ENCODE measurements at regions of chr7 and their contacts with region 1.

Region 1: DNA sequence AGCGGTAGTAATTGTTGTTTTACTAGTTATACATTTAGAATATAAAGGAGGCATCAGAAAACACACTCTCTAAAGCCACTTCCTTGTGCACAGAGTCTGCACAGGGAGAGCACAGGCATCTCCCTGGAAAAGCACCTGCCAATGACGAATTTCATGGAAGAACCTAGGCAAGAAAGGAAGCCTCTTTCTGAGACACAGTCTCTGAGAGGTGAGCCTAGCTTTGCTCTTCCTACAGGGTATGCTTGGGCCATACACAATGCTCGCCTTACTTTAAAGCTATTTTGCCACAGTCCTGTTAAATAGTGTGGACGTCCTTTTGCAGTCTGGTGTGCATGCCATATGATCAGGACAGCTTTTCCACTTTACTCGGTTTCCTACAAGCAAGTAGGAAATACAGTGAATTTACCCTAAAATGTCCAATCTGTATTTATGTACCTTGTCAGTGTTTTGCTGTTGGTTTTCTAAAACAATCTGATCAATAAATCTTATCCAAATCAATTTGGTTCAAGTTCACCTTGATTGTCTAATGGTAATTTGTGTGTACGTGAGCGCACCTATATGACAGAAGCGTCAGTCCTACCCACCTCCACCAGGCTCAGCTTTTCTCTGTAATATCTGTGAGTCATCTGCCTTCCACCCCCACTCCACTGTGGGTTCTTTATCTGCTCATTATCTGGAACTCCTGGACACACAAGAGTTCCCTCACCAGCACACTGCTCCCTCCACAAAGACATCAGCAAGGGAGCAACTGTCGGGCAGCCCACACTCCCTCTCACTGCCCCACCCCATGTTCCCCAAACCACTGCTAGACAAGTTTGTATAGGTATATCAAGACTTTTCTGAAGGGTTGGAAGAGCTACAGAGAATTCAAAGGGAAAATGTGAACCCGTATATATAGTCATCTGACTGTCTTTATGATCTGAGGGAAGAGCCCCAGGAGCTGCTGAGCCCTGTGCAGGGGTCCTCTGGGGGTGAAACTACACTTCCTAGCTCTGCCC is 65.2 kb downstream of the KLHDC10 start:
- DNase-seq: no peak
- H3K4me3 Mint-ChIP-seq: no peak overlapping the region
- H3K27ac Mint-ChIP-seq: no peak overlapping the region
- H3K4me1 Mint-ChIP-seq: peaks cover 19% of the 10 kb centered on the region
- H3K27me3 Mint-ChIP-seq: no peaks in the 10 kb centered on the region

Region 2: GRCh38 chr7:130118294-130118693 is 17.2 kb before region 1 on chr7:
- intact Hi-C with region 1: loop called (anchors 2 kb)
- DNase-seq: no peak
- H3K4me3 Mint-ChIP-seq: no peak overlapping the region
- H3K27ac Mint-ChIP-seq: no peak overlapping the region
- H3K4me1 Mint-ChIP-seq: peaks cover 17% of the 10 kb centered on the region
- H3K27me3 Mint-ChIP-seq: no peaks in the 10 kb centered on the region

Region 3: GRCh38 chr7:130149281-130150139 is 14.0 kb after region 1 on chr7:
- intact Hi-C with region 1: no loop called
- DNase-seq: no peak
- H3K4me3 Mint-ChIP-seq: no peak overlapping the region
- H3K27ac Mint-ChIP-seq: no peak overlapping the region
- H3K4me1 Mint-ChIP-seq: no peaks in the 10 kb centered on the region
- H3K27me3 Mint-ChIP-seq: peaks cover 32% of the 10 kb centered on the region

Measured in activated T-helper 2 cell treated with anti-CD3 and anti-CD28 coated beads, Interferon-gamma antibody, Interleukin-2, Interleukin-4, amounts not matched to agents 10 μg/mL and 5 μg/mL and 100 μg/mL, durations not matched to agents 14 hours and 24 hours and 36 hours (primary cell).